ENCODE measurements at regions of chr3 and their contacts with region 1.

Region 1: DNA sequence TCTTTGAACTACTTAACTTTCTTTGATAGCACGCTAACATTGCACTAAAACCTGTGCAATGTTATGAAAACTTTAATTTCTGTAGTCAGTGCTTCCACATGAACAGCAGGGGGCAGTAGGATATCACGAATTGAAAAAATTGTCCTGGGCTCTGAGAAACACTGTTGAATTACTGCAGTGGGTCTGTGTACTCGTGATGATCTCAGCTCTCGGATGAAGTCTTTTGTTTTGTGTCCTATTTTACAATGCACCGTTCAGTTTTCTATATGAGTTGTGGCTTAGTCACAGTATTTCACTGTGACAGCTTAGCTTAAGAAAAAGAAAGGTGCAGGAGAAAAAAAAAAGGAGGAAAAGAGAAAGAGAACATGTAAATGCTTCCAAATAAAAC is 141.3 kb upstream of the CCDC54 start:
- DNase-seq: peak; percentile 74
- H3K4me3 ChIP-seq: peak overlapping the region; percentile 52
- H3K27ac ChIP-seq: no peak overlapping the region
- H3K27me3 ChIP-seq: no peaks in the 10 kb centered on the region
- CTCF ChIP-seq: peak; percentile 80

Region 2: GRCh38 chr3:106552351-106553043 is 683.4 kb before region 1 on chr3:
- CTCF ChIA-PET with region 1: no interaction called
- POLR2A ChIA-PET with region 1: no interaction called
- DNase-seq: no peak
- H3K4me3 ChIP-seq: no peak overlapping the region
- H3K27ac ChIP-seq: no peak overlapping the region
- H3K27me3 ChIP-seq: no peaks in the 10 kb centered on the region
- CTCF ChIP-seq: no peak

Region 3: DNA sequence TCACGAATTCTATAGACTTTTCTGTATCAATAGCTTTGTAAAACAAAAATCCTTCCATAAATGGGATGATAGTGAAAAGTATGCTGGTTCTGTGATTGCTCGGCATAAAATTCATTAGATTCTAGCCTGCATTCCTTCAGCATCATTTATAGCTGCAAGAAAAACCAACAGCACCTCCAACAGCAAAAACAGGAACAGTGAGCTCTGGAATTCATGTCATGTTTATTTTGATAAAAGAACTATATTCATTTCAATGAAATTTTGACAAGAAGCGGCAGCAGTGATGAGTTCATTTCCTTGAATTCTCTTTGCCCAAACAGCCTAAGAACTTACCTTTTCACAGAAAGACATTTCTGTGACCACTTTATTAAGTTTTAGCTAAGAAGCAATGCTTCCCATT is 373.9 kb before region 1 on chr3:
- CTCF ChIA-PET with region 1: no interaction called
- POLR2A ChIA-PET with region 1: no interaction called
- DNase-seq: no peak
- H3K4me3 ChIP-seq: no peak overlapping the region
- H3K27ac ChIP-seq: no peak overlapping the region
- H3K27me3 ChIP-seq: no peaks in the 10 kb centered on the region
- CTCF ChIP-seq: peak; percentile 50

Region 4: DNA sequence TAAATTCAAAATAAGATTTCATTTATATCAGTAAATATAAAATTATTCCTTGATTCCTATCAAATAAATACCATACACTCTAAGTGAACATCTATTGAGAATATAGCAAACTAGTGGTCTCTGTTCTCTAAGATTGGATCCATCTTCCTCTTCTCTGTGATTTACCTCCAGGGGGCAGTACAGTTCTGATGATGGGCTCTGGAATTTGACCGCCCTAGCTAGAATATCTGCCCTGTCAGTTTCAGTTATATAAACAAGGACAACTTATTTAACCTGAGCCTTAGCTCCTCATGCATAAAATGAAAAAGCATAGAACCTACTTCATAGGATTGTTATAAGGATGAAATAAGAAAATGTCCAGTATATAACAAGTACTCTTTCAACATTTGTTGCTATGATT is 29.8 kb before region 1 on chr3:
- CTCF ChIA-PET with region 1: interaction called, 10 read pairs
- POLR2A ChIA-PET with region 1: no interaction called
- DNase-seq: no peak
- H3K4me3 ChIP-seq: no peak overlapping the region
- H3K27ac ChIP-seq: no peak overlapping the region
- H3K27me3 ChIP-seq: no peaks in the 10 kb centered on the region
- CTCF ChIP-seq: peak; percentile 63

Region 5: DNA sequence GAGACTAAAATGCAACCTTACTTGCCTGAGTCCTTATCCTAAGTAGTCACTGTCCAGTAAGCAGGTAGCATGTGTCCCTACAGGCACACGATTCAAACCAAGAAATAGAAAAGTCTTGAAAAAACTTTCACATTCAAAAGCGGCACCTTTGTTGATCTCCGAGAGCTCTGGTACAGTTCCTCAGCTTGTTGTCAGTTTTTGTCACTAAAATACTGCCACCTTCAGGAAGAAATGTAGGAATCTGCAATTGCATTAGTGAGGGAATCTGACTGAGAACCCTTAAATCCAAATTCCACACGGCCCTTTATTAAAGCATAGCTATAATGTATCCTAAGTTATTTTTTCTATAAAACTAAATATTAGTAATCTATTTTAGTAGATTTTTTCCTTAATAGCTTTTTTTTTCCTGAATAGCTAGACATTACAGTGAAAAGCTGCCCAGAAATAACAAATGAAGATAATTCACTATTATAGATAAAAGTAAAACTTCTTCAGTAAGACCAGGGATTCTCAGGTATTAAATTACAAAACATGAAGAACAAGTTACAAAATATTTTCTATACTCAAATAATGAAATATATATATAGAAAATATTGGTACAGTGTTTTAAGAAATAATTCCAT is 185.4 kb after region 1 on chr3:
- CTCF ChIA-PET with region 1: interaction called, 49 read pairs
- POLR2A ChIA-PET with region 1: no interaction called
- DNase-seq: no peak
- H3K4me3 ChIP-seq: peak overlapping the region; percentile 47
- H3K27ac ChIP-seq: no peak overlapping the region
- H3K27me3 ChIP-seq: no peaks in the 10 kb centered on the region
- CTCF ChIP-seq: peak; percentile 69

Region 6: DNA sequence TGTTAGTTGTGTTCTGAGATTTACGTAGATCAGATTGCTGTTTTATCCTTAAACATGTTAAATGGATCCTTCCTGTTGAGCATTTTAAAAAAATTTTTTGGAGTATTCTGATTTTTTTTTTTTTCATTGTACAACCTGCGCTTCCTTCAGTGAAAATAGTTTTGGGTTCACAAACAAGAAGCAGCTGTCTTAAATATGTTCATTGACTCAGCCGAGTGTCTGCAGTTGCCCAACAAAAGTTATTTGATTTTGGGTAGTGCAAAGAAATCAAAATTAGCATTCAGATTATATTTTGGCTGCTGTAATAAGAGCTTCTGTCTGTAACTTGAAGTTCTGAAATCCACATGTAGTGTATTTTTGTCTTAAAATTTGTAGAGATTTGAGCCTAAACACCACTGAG is 435.1 kb after region 1 on chr3:
- CTCF ChIA-PET with region 1: interaction called, 21 read pairs
- POLR2A ChIA-PET with region 1: no interaction called
- DNase-seq: no peak
- H3K4me3 ChIP-seq: no peak overlapping the region
- H3K27ac ChIP-seq: no peak overlapping the region
- H3K27me3 ChIP-seq: no peaks in the 10 kb centered on the region
- CTCF ChIP-seq: no peak

Region 7: GRCh38 chr3:107740992-107741896 is 505.3 kb after region 1 on chr3:
- CTCF ChIA-PET with region 1: interaction called, 24 read pairs
- POLR2A ChIA-PET with region 1: no interaction called
- DNase-seq: no peak
- H3K4me3 ChIP-seq: no peak overlapping the region
- H3K27ac ChIP-seq: no peak overlapping the region
- H3K27me3 ChIP-seq: no peaks in the 10 kb centered on the region
- CTCF ChIP-seq: peak; percentile 62

Region 8: DNA sequence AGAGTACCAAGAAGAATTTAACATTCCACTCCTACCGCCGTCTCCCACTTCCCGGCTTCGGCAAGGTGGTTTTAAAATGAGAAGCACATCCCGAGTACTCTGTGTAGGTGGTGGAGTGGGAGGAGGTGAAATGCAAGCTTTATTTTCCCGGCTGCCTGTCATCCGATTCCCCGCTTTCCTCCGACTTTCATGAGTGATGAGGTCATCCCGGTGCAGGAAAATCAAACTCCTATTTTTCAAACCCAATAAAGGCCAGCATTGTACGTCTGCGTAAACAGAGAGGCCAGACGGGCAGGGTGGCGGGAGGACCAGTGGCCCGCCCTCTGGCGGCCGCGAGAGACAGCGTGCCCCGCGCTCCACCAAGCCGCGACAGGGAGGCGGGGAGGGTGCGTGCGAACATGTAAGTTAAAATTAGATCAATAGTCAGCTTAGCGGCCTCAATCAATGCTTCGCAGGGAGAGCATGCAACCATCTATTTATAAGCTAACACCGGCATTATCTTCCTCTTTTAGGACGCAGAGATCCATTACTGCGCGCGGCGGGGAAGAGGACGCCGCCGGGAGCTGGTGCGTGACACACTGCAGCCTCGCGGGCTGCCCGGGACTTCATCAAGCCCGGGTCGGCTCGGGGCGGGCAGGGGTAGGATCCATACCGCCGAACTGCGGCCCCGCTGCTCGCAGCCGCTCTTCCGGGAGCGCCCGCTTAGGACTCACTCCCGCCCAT is 691.6 kb after region 1 on chr3:
- CTCF ChIA-PET with region 1: interaction called, 25 read pairs
- POLR2A ChIA-PET with region 1: no interaction called
- DNase-seq: peak; percentile 18
- H3K4me3 ChIP-seq: peak overlapping the region; percentile 66
- H3K27ac ChIP-seq: no peak overlapping the region
- H3K27me3 ChIP-seq: no peaks in the 10 kb centered on the region
- CTCF ChIP-seq: peak; percentile 93

Region 9: GRCh38 chr3:108552267-108553159 is 1316.6 kb after region 1 on chr3:
- CTCF ChIA-PET with region 1: interaction called, 13 read pairs
- POLR2A ChIA-PET with region 1: no interaction called
- DNase-seq: peak; percentile 4
- H3K4me3 ChIP-seq: no peak overlapping the region
- H3K27ac ChIP-seq: no peak overlapping the region
- H3K27me3 ChIP-seq: no peaks in the 10 kb centered on the region
- CTCF ChIP-seq: peak; percentile 53

Measured in AG04450 (cell line).